Lower leg skin (tissue), 4 donors: ENCODE measurements at regions of chr4 and their contacts with region 1.

Region 1: GRCh38 chr4:188466001-188466400 is 326.8 kb downstream of the TRIML1 start:
- DNase-seq: no peak
- H3K4me3 ChIP-seq: no peak overlapping the region
- CTCF ChIP-seq: no peak
- POLR2A ChIP-seq: no peak

Region 2: DNA sequence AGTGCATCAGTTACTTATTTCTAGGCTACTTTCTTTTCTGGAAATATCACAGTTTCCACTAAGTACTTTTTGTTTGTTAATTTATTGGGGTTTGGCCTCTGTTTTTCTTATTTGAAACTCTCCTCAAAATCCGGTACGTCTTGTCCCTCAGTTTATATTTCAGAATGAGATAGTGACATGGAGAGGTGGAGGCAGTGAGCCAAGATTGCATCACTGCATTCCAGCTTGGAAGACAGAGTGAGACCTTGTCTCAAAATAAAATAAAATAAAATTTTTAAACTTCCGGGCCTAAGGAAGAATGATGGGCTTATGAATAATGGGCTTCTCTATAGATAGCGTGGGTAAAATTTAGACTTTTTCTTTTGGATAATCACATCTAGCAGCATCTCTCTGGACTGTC is 241.0 kb after region 1 on chr4:
- intact Hi-C with region 1: no loop called
- DNase-seq: no peak
- H3K4me3 ChIP-seq: no peak overlapping the region
- CTCF ChIP-seq: no peak
- POLR2A ChIP-seq: no peak

Region 3: GRCh38 chr4:189912170-189912569 is 1446.2 kb after region 1 on chr4:
- intact Hi-C with region 1: loop called (anchors 5 kb)
- DNase-seq: no peak
- H3K4me3 ChIP-seq: no peak overlapping the region
- CTCF ChIP-seq: no peak
- POLR2A ChIP-seq: no peak